ENCODE measurements at regions of chr15 and their contacts with region 1.

Region 1: DNA sequence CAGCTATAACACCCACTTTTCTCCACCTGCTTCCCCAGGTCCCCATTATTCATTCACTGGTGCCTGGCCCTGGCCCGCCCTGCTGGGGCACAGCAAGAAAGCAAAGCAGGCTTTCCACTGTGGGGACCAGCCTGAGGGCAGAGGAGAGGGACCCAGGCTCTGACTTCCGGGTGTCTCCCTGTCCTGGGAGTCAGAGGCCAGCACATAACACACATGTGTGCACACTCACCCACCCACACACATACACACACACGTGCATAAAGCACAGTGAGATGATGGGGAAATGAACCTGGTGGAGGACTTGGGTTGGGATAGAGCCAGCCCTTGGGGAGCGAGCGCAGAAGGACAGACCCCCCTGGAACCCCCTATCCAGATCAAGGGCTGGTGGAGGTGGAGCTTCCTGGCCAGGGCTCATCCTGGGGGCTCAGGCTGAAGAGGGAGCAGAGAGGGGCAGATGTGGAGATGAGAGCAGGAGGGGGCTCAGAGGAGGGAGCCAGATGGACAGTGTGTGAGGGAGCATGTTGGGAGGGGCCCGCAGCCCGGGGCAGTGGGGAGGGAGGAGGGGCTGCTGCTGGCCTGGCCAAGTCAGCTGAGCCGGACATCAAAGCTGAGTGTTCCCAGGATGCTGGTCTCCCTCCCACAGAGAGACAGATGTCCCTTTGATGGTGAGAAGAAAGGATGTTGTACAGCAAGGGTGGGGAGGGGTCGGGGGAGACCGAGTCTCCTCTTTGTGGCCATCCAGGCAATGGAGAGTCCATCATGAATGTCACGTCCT is 78.2 kb downstream of the LINGO1 start:
- DNase-seq: no peak
- H3K4me3 ChIP-seq: no peak overlapping the region
- H3K27ac ChIP-seq: no peak overlapping the region
- H3K4me1 ChIP-seq: no peaks in the 10 kb centered on the region
- H3K27me3 ChIP-seq: no peaks in the 10 kb centered on the region
- CTCF ChIP-seq: no peak
- POLR2A ChIP-seq: no peak

Region 2: GRCh38 chr15:76809412-76810103 is 744.9 kb before region 1 on chr15:
- intact Hi-C with region 1: no loop called
- DNase-seq: no peak
- H3K4me3 ChIP-seq: no peak overlapping the region
- H3K27ac ChIP-seq: no peak overlapping the region
- H3K4me1 ChIP-seq: no peaks in the 10 kb centered on the region
- H3K27me3 ChIP-seq: no peaks in the 10 kb centered on the region
- CTCF ChIP-seq: no peak
- POLR2A ChIP-seq: no peak

Region 3: GRCh38 chr15:77312523-77312922 is 242.0 kb before region 1 on chr15:
- intact Hi-C with region 1: loop called (anchors 5 kb)
- DNase-seq: no peak
- H3K4me3 ChIP-seq: no peak overlapping the region
- H3K27ac ChIP-seq: no peak overlapping the region
- H3K4me1 ChIP-seq: no peaks in the 10 kb centered on the region
- H3K27me3 ChIP-seq: no peaks in the 10 kb centered on the region
- CTCF ChIP-seq: no peak
- POLR2A ChIP-seq: no peak

Region 4: GRCh38 chr15:77482570-77482969 is 71.9 kb before region 1 on chr15:
- intact Hi-C with region 1: no loop called
- DNase-seq: no peak
- H3K4me3 ChIP-seq: no peak overlapping the region
- H3K27ac ChIP-seq: no peak overlapping the region
- H3K4me1 ChIP-seq: no peaks in the 10 kb centered on the region
- H3K27me3 ChIP-seq: no peaks in the 10 kb centered on the region
- CTCF ChIP-seq: no peak
- POLR2A ChIP-seq: no peak

Region 5: DNA sequence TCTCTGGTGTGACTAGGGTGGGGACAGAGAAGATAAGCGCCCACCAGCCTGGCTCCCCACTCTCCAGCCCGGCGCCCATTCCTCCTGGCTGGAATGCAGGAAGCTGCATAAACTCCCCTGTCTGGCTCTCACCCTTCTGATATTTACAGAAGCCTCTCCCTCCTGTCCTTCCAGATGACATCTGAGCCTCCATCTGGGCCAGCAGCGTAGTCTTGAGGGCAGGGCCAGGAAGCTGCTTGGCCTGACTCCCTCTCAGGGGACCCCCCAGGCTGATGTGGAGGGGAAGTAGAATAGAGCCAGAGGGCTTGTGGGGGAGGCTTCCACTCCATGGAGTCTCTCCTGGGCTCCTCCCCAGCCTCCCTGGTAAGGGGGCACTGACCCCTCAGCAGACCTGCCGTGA is 28.3 kb after region 1 on chr15:
- intact Hi-C with region 1: loop called (anchors 1 kb)
- DNase-seq: no peak
- H3K4me3 ChIP-seq: no peak overlapping the region
- H3K27ac ChIP-seq: no peak overlapping the region
- H3K4me1 ChIP-seq: no peaks in the 10 kb centered on the region
- H3K27me3 ChIP-seq: no peaks in the 10 kb centered on the region
- CTCF ChIP-seq: no peak
- POLR2A ChIP-seq: no peak

Region 6: GRCh38 chr15:77821188-77821958 is 266.9 kb after region 1 on chr15:
- intact Hi-C with region 1: no loop called
- DNase-seq: peak in 1 of 2 donors; percentile 24
- H3K4me3 ChIP-seq: peak overlapping the region in 1 of 3 donors; percentile 8
- H3K27ac ChIP-seq: no peak overlapping the region
- H3K4me1 ChIP-seq: no peaks in the 10 kb centered on the region
- H3K27me3 ChIP-seq: peaks cover 9 to 55% of the 10 kb centered on the region in 2 donors
- CTCF ChIP-seq: peak in 2 of 3 donors; percentile 40 to 59
- POLR2A ChIP-seq: no peak

Measured in breast epithelium (tissue), 4 donors.